CD14-positive monocyte (primary cell): ENCODE measurements at regions of chr16 and their contacts with region 1.

Region 1: DNA sequence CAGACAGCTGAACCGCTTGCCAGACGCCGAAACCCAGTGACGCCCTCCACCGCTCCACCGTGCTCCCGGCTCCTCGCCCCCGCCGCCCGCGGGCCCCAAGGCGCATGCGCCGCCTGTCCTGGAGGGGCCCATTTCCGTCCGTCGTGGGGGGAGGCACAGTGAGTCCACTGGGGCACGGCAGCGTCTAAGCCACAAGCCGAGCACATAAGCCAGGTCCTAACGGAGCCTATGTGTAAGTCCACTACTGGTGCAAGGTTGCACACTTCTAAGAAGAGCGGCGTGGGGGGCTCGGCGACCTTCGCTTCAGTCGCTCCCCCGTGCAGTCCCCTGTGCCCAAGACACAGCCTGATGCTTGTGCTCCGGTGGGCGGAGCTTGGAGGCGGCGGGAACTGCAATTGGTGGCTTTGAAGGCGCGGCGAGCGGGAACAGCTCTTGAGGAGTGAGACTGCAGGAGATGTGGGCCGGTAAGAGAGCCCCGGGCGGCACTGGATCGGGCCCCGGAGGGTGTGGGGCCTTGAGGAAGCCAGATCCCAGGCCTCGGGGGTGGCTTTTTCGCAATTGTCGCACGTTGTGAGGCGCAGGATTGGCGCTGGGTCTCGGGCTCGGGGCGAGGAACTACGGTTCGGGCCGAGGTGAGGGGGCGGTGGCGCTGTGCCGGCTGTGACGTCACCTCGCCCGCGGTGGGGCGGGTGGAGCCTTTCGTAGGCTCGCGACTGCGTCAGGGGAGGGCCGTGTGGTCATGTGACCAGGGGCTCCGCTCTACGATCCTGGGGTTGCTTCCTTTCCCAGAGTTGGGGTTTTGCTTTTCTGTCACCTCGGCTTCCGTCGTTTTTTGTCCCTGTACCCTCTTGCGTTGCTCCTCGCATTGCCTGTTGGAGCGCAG is at the starts of genes CENPN and CMC2:
- DNase-seq: peak; percentile 98 to 99 (median 99)
- H3K4me3 ChIP-seq: peak within 1 kb of the TSS; percentile 56 to 95 (median 76)
- H3K4me3 Mint-ChIP-seq: peak within 1 kb of the TSS; percentile 91 to 98
- H3K27ac ChIP-seq: peak within 1 kb of the TSS; percentile 90 to 98
- H3K27ac Mint-ChIP-seq: peak within 1 kb of the TSS; percentile 99 to 100 (median 100)
- H3K4me1 ChIP-seq: peaks cover 29 to 37% of the 10 kb centered on the region in 2 donors
- H3K4me1 Mint-ChIP-seq: peaks cover 42% of the 10 kb centered on the region
- H3K27me3 ChIP-seq: no peaks in the 10 kb centered on the region
- H3K27me3 Mint-ChIP-seq: peaks cover 0 to 2% (median 0%) of the 10 kb centered on the region in 3 donors
- CTCF ChIP-seq: no peak
- polyA plus RNA-seq, gene CENPN: 2.5 to 4.9 (median 4.4) TPM
- polyA plus RNA-seq, gene CMC2: 55.3 to 79.5 (median 70.7) TPM

Region 2: GRCh38 chr16:79182616-79183015 is 1824.4 kb before region 1 on chr16:
- intact Hi-C with region 1: no loop called
- DNase-seq: no peak
- H3K4me3 ChIP-seq: no peak overlapping the region
- H3K4me3 Mint-ChIP-seq: no peak overlapping the region
- H3K27ac ChIP-seq: no peak overlapping the region
- H3K27ac Mint-ChIP-seq: no peak overlapping the region
- H3K4me1 ChIP-seq: no peaks in the 10 kb centered on the region
- H3K4me1 Mint-ChIP-seq: no peaks in the 10 kb centered on the region
- H3K27me3 ChIP-seq: no peaks in the 10 kb centered on the region
- H3K27me3 Mint-ChIP-seq: peaks cover 2 to 5% (median 4%) of the 10 kb centered on the region in 3 donors
- CTCF ChIP-seq: no peak

Region 3: GRCh38 chr16:80540516-80541272 is 466.4 kb before region 1 on chr16 and contains the start of gene DYNLRB2:
- intact Hi-C with region 1: loop called in 1 of 2 experiments (anchors 10 kb)
- DNase-seq: peak; percentile 91 to 93 (median 91)
- H3K4me3 ChIP-seq: peak within 1 kb of the TSS; percentile 73 to 90 (median 85)
- H3K4me3 Mint-ChIP-seq: peak within 1 kb of the TSS; percentile 86 to 93
- H3K27ac ChIP-seq: peak within 1 kb of the TSS; percentile 34 to 84
- H3K27ac Mint-ChIP-seq: peak within 1 kb of the TSS; percentile 90 to 97 (median 92)
- H3K4me1 ChIP-seq: peaks cover 11 to 12% of the 10 kb centered on the region in 2 donors
- H3K4me1 Mint-ChIP-seq: peaks cover 15% of the 10 kb centered on the region
- H3K27me3 ChIP-seq: peaks cover 0 to 4% of the 10 kb centered on the region in 2 donors
- H3K27me3 Mint-ChIP-seq: peaks cover 4 to 11% (median 10%) of the 10 kb centered on the region in 3 donors
- CTCF ChIP-seq: no peak
- polyA plus RNA-seq, gene DYNLRB2: not detected

Region 4: GRCh38 chr16:80958284-80958683 is 48.8 kb before region 1 on chr16:
- intact Hi-C with region 1: no loop called
- DNase-seq: no peak
- H3K4me3 ChIP-seq: no peak overlapping the region
- H3K4me3 Mint-ChIP-seq: no peak overlapping the region
- H3K27ac ChIP-seq: no peak overlapping the region
- H3K27ac Mint-ChIP-seq: no peak overlapping the region
- H3K4me1 ChIP-seq: no peaks in the 10 kb centered on the region
- H3K4me1 Mint-ChIP-seq: no peaks in the 10 kb centered on the region
- H3K27me3 ChIP-seq: no peaks in the 10 kb centered on the region
- H3K27me3 Mint-ChIP-seq: peaks cover 0 to 2% (median 2%) of the 10 kb centered on the region in 3 donors
- CTCF ChIP-seq: no peak

Region 5: DNA sequence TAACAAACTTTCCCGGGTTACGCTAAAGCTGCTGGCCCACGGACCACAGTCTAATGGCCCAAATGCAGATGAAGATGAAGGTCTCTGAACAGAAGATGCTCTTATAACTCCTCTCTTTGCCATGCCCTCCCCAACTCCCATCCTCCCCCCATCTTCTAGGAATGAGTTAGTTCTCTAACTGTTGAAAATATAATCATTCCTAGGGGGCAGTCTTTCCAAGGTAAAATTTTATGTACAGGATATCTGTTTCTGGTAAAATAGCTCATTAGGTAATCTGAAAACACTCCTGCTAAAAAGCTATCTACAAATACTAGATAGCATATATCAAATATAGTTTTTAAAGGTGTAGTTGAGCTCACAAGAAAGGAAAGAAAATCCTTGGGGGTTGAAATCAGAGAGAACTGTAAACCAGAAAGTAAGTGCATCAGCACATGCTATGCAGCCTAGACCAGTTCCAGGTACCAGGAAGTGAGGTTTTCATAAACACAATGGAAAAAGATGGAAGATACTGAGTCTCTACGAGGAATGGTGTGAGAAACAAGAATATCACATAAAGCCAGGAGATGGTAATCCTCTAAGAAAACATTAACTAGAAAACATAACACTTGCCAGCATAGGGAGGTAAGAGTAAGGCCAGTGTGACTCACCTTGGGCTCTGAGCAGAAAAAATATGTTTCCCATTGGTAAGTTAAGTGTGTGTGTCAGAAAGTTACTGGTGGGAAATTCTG is 38.5 kb before region 1 on chr16:
- intact Hi-C with region 1: no loop called
- DNase-seq: no peak
- H3K4me3 ChIP-seq: no peak overlapping the region
- H3K4me3 Mint-ChIP-seq: no peak overlapping the region
- H3K27ac ChIP-seq: no peak overlapping the region
- H3K27ac Mint-ChIP-seq: no peak overlapping the region
- H3K4me1 ChIP-seq: no peaks in the 10 kb centered on the region
- H3K4me1 Mint-ChIP-seq: no peaks in the 10 kb centered on the region
- H3K27me3 ChIP-seq: no peaks in the 10 kb centered on the region
- H3K27me3 Mint-ChIP-seq: peaks cover 0 to 5% (median 2%) of the 10 kb centered on the region in 3 donors
- CTCF ChIP-seq: no peak

Region 6: GRCh38 chr16:81035398-81035974 is 28.4 kb after region 1 on chr16 and contains the start of gene ATMIN:
- intact Hi-C with region 1: loop called in 1 of 2 experiments (anchors 5 kb)
- DNase-seq: peak; percentile 72 to 87 (median 84)
- H3K4me3 ChIP-seq: peak within 1 kb of the TSS; percentile 49 to 84 (median 73)
- H3K4me3 Mint-ChIP-seq: peak within 1 kb of the TSS; percentile 82 to 88
- H3K27ac ChIP-seq: peak within 1 kb of the TSS in 1 of 2 donors; percentile 50
- H3K27ac Mint-ChIP-seq: peak within 1 kb of the TSS in 6 of 7 donors; percentile 56 to 70 (median 62)
- H3K4me1 ChIP-seq: peaks cover 14% of the 10 kb centered on the region in 2 donors
- H3K4me1 Mint-ChIP-seq: peaks cover 23% of the 10 kb centered on the region
- H3K27me3 ChIP-seq: no peaks in the 10 kb centered on the region
- H3K27me3 Mint-ChIP-seq: no peaks in the 10 kb centered on the region
- CTCF ChIP-seq: peak; percentile 95
- polyA plus RNA-seq, gene ATMIN: 10.9 to 17.6 (median 13.2) TPM

Region 7: GRCh38 chr16:81077076-81077940 is 70.3 kb after region 1 on chr16 and contains the start of gene C16orf46:
- intact Hi-C with region 1: loop called in 1 of 2 experiments (anchors 1 kb)
- DNase-seq: peak; percentile 92 to 95 (median 94)
- H3K4me3 ChIP-seq: peak within 1 kb of the TSS; percentile 75 to 92 (median 78)
- H3K4me3 Mint-ChIP-seq: no peak within 1 kb of the TSS
- H3K27ac ChIP-seq: peak within 1 kb of the TSS; percentile 76 to 91
- H3K27ac Mint-ChIP-seq: no peak within 1 kb of the TSS
- H3K4me1 ChIP-seq: peaks cover 12 to 13% of the 10 kb centered on the region in 2 donors
- H3K4me1 Mint-ChIP-seq: peaks cover 3% of the 10 kb centered on the region
- H3K27me3 ChIP-seq: no peaks in the 10 kb centered on the region
- H3K27me3 Mint-ChIP-seq: peaks cover 0 to 4% (median 2%) of the 10 kb centered on the region in 3 donors
- CTCF ChIP-seq: no peak
- polyA plus RNA-seq, gene C16orf46: 0.37 to 0.42 TPM in 2 of 3 donors, not detected in the other

Region 8: GRCh38 chr16:81095953-81096717 is 89.1 kb after region 1 on chr16 and contains the start of gene GCSH:
- intact Hi-C with region 1: loop called (anchors 2 to 5 kb)
- DNase-seq: peak; percentile 97 to 98 (median 98)
- H3K4me3 ChIP-seq: peak within 1 kb of the TSS; percentile 35 to 89 (median 44)
- H3K4me3 Mint-ChIP-seq: peak within 1 kb of the TSS; percentile 76 to 89
- H3K27ac ChIP-seq: peak within 1 kb of the TSS in 1 of 2 donors; percentile 25
- H3K27ac Mint-ChIP-seq: peak within 1 kb of the TSS in 3 of 7 donors; percentile 33 to 78 (median 55)
- H3K4me1 ChIP-seq: peaks cover 9 to 16% of the 10 kb centered on the region in 2 donors
- H3K4me1 Mint-ChIP-seq: peaks cover 15% of the 10 kb centered on the region
- H3K27me3 ChIP-seq: peaks cover 0 to 7% of the 10 kb centered on the region in 2 donors
- H3K27me3 Mint-ChIP-seq: peaks cover 15 to 17% (median 16%) of the 10 kb centered on the region in 3 donors
- CTCF ChIP-seq: no peak
- polyA plus RNA-seq, gene GCSH: 0.77 to 2.0 (median 1.0) TPM

Region 9: DNA sequence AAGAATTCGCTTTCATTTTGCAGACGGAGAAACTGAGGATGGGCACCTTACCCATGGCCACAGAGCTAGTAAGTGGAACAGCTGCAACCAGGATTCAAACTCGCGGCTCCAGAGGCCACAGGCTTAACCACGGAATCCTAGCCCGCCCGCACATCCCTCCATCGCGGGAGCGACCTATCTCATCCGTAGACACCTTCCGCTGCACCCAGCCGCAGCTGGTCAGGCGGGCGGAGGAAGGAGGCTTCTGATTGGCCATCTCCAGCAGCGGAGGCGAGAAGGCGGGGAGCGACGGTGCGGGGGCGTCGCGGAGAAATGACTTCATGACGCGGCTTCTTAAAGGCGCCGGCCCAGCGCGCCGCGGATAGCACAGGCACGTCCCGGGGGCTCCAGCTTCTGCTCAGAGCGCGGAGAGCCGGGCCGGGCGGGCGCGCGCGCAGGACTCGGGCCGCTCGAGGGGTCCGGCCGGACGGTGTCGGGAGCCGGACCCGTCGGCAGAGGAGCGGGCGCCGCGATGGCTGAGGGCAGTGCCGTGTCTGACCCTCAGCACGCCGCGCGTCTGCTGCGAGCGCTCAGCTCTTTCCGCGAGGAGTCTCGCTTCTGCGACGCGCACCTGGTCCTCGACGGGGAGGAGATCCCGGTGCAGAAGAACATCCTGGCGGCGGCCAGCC is 307.7 kb after region 1 on chr16 and contains the start of gene GAN:
- intact Hi-C with region 1: loop called in 1 of 2 experiments (anchors 10 kb)
- DNase-seq: peak; percentile 91 to 93 (median 93)
- H3K4me3 ChIP-seq: peak within 1 kb of the TSS; percentile 74 to 92 (median 76)
- H3K4me3 Mint-ChIP-seq: peak within 1 kb of the TSS; percentile 95 to 97
- H3K27ac ChIP-seq: peak within 1 kb of the TSS in 1 of 2 donors; percentile 85
- H3K27ac Mint-ChIP-seq: peak within 1 kb of the TSS; percentile 60 to 94 (median 89)
- H3K4me1 ChIP-seq: peaks cover 15 to 24% of the 10 kb centered on the region in 2 donors
- H3K4me1 Mint-ChIP-seq: peaks cover 30% of the 10 kb centered on the region
- H3K27me3 ChIP-seq: peaks cover 0 to 3% of the 10 kb centered on the region in 2 donors
- H3K27me3 Mint-ChIP-seq: peaks cover 0 to 7% (median 5%) of the 10 kb centered on the region in 3 donors
- CTCF ChIP-seq: no peak
- polyA plus RNA-seq, gene GAN: 0.89 to 1.2 (median 1.0) TPM

Region 10: DNA sequence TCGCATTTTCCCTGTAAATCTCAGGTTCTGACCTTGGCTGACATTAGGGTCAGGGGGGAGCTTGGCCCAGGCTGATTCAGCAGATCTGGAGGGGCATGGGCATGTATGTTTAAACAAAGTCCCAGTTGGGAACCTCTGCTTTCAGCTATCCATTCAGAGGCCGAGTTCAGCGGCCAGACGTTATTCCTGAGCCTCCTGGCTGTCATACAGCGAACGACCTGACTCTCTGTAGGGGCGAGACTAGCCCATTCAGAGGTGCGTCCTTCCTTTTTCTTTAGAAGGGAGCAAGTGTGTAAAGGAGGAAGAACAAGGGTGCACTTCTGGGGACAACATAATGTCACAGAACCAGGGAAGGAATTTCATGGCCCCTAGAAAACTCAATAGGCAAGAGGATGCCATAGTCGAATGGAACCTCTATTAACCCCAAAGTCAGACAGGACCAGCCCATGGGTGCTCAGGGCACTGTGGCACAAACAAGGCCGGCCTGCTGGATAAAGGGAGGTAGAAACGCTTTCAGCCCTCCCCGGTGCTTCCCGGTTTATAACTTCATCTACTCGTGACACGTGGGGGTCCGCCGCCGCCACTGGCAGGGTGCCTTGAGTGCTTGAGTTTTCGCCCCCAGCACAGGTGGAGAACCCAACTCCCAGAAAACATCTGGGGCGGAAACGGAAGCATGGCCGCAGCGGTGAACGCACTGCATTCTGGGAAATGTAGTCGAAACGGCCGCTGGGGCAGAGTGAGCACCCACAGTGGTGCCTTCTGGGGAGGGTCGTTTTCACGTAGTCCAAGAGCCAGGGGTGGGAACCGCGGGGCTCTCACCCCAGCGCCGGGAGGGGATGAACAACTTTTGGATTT is 738.9 kb after region 1 on chr16:
- intact Hi-C with region 1: loop called in 1 of 2 experiments (anchors 10 kb)
- DNase-seq: peak in 2 of 3 donors; percentile 49 to 57
- H3K4me3 ChIP-seq: peak overlapping the region; percentile 30 to 78 (median 38)
- H3K4me3 Mint-ChIP-seq: peak overlapping the region; percentile 84 to 92
- H3K27ac ChIP-seq: peak overlapping the region in 1 of 2 donors; percentile 65
- H3K27ac Mint-ChIP-seq: peak overlapping the region in 6 of 7 donors; percentile 76 to 92 (median 88)
- H3K4me1 ChIP-seq: peaks cover 27 to 32% of the 10 kb centered on the region in 2 donors
- H3K4me1 Mint-ChIP-seq: peaks cover 35% of the 10 kb centered on the region
- H3K27me3 ChIP-seq: no peaks in the 10 kb centered on the region
- H3K27me3 Mint-ChIP-seq: peaks cover 2 to 3% (median 3%) of the 10 kb centered on the region in 3 donors
- CTCF ChIP-seq: no peak